H1 (cell line): ENCODE measurements at regions of chr10 and their contacts with region 1.

Region 1: GRCh38 chr10:43348511-43349312 is 22.7 kb upstream of the FXYD4 start:
- DNase-seq: peak; percentile 69 to 91
- H3K4me3 ChIP-seq: no peak overlapping the region
- H3K27ac ChIP-seq: no peak overlapping the region
- H3K4me1 ChIP-seq: peaks cover 0 to 4% (median 2%) of the 10 kb centered on the region in 4 experiments; a peak in 3 of 7 replicates
- H3K27me3 ChIP-seq: no peaks in the 10 kb centered on the region
- CTCF ChIP-seq: peak; percentile 95 to 98 (median 98)
- EP300 ChIP-seq: no peak
- POLR2A ChIP-seq: no peak
- RAD21 ChIP-seq: peak; percentile 96

Region 2: GRCh38 chr10:43255634-43256431 is 92.9 kb before region 1 on chr10:
- CTCF ChIA-PET with region 1: interaction called, 12 read pairs
- POLR2A ChIA-PET with region 1: no interaction called
- DNase-seq: peak in 1 of 2 experiments; percentile 75
- H3K4me3 ChIP-seq: no peak overlapping the region
- H3K27ac ChIP-seq: no peak overlapping the region
- H3K4me1 ChIP-seq: peaks cover 0 to 7% (median under 1%) of the 10 kb centered on the region in 4 experiments; a peak in 5 of 7 replicates
- H3K27me3 ChIP-seq: no peaks in the 10 kb centered on the region
- CTCF ChIP-seq: peak in 2 of 3 experiments; percentile 85 to 90; a peak in 3 of 4 replicates
- EP300 ChIP-seq: no peak
- POLR2A ChIP-seq: no peak
- RAD21 ChIP-seq: peak; percentile 65 to 74

Region 3: DNA sequence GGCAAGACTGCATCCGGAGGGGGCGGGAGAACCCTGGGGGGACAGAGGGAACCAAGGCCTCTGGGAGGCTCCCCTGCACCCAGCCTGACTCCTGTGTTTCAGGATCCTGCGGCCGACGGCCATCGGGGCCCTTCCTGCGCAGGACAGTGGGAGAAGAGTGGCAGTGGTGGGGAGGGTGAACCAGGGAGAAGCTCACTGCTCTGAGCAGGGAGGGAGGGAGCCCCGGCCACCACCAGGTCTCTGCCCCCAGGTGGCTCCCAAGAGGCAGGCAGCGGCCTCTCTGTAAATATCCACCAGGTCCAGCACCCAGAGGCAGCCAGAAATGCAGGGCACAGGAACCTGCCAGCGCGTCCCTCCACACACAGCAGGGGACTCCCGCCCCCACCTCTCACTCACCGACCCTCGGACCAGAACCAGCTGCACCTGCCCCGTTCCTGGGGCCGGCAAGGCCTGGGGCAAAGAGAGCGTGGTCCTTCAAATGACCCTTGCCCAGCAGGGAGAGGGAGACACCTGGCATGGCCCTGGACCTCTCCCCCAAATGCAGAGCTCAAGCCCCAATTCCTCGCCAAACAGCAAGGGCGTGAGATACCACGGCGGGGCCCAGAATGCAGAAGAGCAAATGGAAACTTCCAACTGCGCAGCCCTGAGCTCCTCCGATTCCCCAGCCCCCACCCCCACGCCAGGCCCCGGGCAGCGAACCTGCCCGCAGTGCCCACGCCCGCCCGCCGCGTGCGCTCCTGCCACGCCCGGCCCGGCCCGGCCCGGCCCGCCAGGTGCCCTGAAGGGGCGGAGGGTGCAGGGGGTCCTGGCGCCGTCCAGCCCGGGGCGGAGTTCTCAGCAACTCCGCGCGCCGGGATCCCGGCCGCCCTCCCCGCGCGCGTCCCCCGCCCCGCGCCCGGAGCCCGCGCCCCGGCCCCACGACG is 82.7 kb before region 1 on chr10:
- CTCF ChIA-PET with region 1: interaction called, 13 read pairs
- POLR2A ChIA-PET with region 1: no interaction called
- DNase-seq: peak in 1 of 2 experiments; percentile 60
- H3K4me3 ChIP-seq: peak overlapping the region; percentile 31 to 59 (median 42)
- H3K27ac ChIP-seq: no peak overlapping the region
- H3K4me1 ChIP-seq: peaks cover 0 to 12% (median 4%) of the 10 kb centered on the region in 4 experiments; a peak in 5 of 7 replicates
- H3K27me3 ChIP-seq: peaks cover 19 to 36% (median 35%) of the 10 kb centered on the region in 4 experiments
- CTCF ChIP-seq: peak in 2 of 3 experiments; percentile 57 to 59; a peak in 3 of 4 replicates
- EP300 ChIP-seq: no peak
- POLR2A ChIP-seq: no peak
- RAD21 ChIP-seq: peak; percentile 45 to 57; a peak in 3 of 4 replicates

Region 4: GRCh38 chr10:43284341-43284910 is 64.3 kb before region 1 on chr10:
- CTCF ChIA-PET with region 1: interaction called, 10 read pairs
- POLR2A ChIA-PET with region 1: no interaction called
- DNase-seq: no peak
- H3K4me3 ChIP-seq: no peak overlapping the region
- H3K27ac ChIP-seq: no peak overlapping the region
- H3K4me1 ChIP-seq: peaks cover 0 to 6% (median 3%) of the 10 kb centered on the region in 4 experiments; a peak in 5 of 7 replicates
- H3K27me3 ChIP-seq: peaks cover 0 to 8% (median 3%) of the 10 kb centered on the region in 4 experiments; a peak in 2 of 7 replicates
- CTCF ChIP-seq: no peak
- EP300 ChIP-seq: no peak
- POLR2A ChIP-seq: no peak
- RAD21 ChIP-seq: no peak

Region 5: GRCh38 chr10:43292755-43293676 is 55.7 kb before region 1 on chr10:
- CTCF ChIA-PET with region 1: interaction called, 75 read pairs
- POLR2A ChIA-PET with region 1: no interaction called
- DNase-seq: no peak
- H3K4me3 ChIP-seq: no peak overlapping the region
- H3K27ac ChIP-seq: no peak overlapping the region
- H3K4me1 ChIP-seq: no peaks in the 10 kb centered on the region; a peak in 2 of 7 replicates
- H3K27me3 ChIP-seq: peaks cover 0 to 2% (median 0%) of the 10 kb centered on the region in 4 experiments; a peak in 1 of 7 replicates
- CTCF ChIP-seq: peak; percentile 73 to 82 (median 82)
- EP300 ChIP-seq: no peak
- POLR2A ChIP-seq: no peak
- RAD21 ChIP-seq: peak; percentile 85 to 89

Region 6: GRCh38 chr10:43315535-43316207 is 33.0 kb before region 1 on chr10:
- CTCF ChIA-PET with region 1: interaction called, 10 read pairs
- POLR2A ChIA-PET with region 1: no interaction called
- DNase-seq: no peak
- H3K4me3 ChIP-seq: no peak overlapping the region
- H3K27ac ChIP-seq: no peak overlapping the region
- H3K4me1 ChIP-seq: peaks cover 0 to 3% (median 1%) of the 10 kb centered on the region in 4 experiments; a peak in 2 of 7 replicates
- H3K27me3 ChIP-seq: no peaks in the 10 kb centered on the region
- CTCF ChIP-seq: peak in 1 of 3 experiments; percentile 6; a peak in 1 of 4 replicates
- EP300 ChIP-seq: no peak
- POLR2A ChIP-seq: no peak
- RAD21 ChIP-seq: peak in 1 of 2 experiments; percentile 31; a peak in 1 of 4 replicates

Region 7: GRCh38 chr10:43427166-43427825 is 78.6 kb after region 1 on chr10:
- CTCF ChIA-PET with region 1: no interaction called
- POLR2A ChIA-PET with region 1: no interaction called
- DNase-seq: no peak
- H3K4me3 ChIP-seq: no peak overlapping the region
- H3K27ac ChIP-seq: no peak overlapping the region
- H3K4me1 ChIP-seq: no peaks in the 10 kb centered on the region
- H3K27me3 ChIP-seq: no peaks in the 10 kb centered on the region
- CTCF ChIP-seq: no peak
- EP300 ChIP-seq: no peak
- POLR2A ChIP-seq: no peak
- RAD21 ChIP-seq: no peak

Region 8: GRCh38 chr10:43461950-43462349 is 113.2 kb after region 1 on chr10:
- CTCF ChIA-PET with region 1: interaction called, 12 read pairs
- POLR2A ChIA-PET with region 1: no interaction called
- DNase-seq: no peak
- H3K4me3 ChIP-seq: no peak overlapping the region
- H3K27ac ChIP-seq: no peak overlapping the region
- H3K4me1 ChIP-seq: peaks cover 0 to 5% (median 1%) of the 10 kb centered on the region in 4 experiments; a peak in 4 of 7 replicates
- H3K27me3 ChIP-seq: no peaks in the 10 kb centered on the region
- CTCF ChIP-seq: peak in 2 of 3 experiments; percentile 43 to 53; a peak in 2 of 4 replicates
- EP300 ChIP-seq: no peak
- POLR2A ChIP-seq: no peak
- RAD21 ChIP-seq: peak; percentile 78

Region 9: DNA sequence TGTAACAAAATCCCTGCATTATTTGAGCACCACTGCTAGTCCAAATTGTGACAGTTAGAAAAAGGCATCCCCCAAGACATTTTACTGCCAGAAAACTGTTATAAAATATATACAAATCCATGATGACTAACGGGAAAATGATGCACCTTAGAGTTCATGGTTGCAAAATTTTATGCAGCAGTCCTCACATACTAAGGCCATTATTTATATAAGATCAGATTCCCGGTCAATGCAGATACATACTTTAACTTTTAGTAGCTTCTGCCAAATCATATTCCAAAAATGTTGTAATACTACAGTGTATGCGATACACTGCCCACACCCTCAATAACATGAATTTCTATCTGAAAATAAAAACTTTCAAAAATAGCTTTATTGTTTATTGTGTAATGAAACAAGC is 539.9 kb after region 1 on chr10:
- CTCF ChIA-PET with region 1: no interaction called
- POLR2A ChIA-PET with region 1: no interaction called
- DNase-seq: no peak
- H3K4me3 ChIP-seq: no peak overlapping the region
- H3K27ac ChIP-seq: no peak overlapping the region
- H3K4me1 ChIP-seq: no peaks in the 10 kb centered on the region
- H3K27me3 ChIP-seq: no peaks in the 10 kb centered on the region
- CTCF ChIP-seq: no peak
- EP300 ChIP-seq: no peak
- POLR2A ChIP-seq: no peak
- RAD21 ChIP-seq: no peak